H1 (cell line): ENCODE measurements at regions of chr14 and their contacts with region 1.

Region 1: GRCh38 chr14:22084393-22085281 is 411.0 kb upstream of the OR4E1 start:
- DNase-seq: no peak
- H3K4me3 ChIP-seq: no peak overlapping the region
- H3K27ac ChIP-seq: no peak overlapping the region
- H3K4me1 ChIP-seq: peaks cover 0 to 3% (median 0%) of the 10 kb centered on the region in 4 experiments; a peak in 2 of 7 replicates
- H3K27me3 ChIP-seq: no peaks in the 10 kb centered on the region
- CTCF ChIP-seq: peak in 2 of 3 experiments; percentile 45 to 62; a peak in 2 of 4 replicates
- EP300 ChIP-seq: no peak
- POLR2A ChIP-seq: no peak
- RAD21 ChIP-seq: peak; percentile 44 to 45

Region 2: GRCh38 chr14:22070119-22071011 is 14.3 kb before region 1 on chr14:
- CTCF ChIA-PET with region 1: interaction called, 10 read pairs
- POLR2A ChIA-PET with region 1: no interaction called
- DNase-seq: peak in 1 of 2 experiments; percentile 60
- H3K4me3 ChIP-seq: peak overlapping the region; percentile 10 to 58 (median 28); a peak in 5 of 8 replicates
- H3K27ac ChIP-seq: no peak overlapping the region
- H3K4me1 ChIP-seq: peaks cover 0 to 5% (median 0%) of the 10 kb centered on the region in 4 experiments; a peak in 1 of 7 replicates
- H3K27me3 ChIP-seq: no peaks in the 10 kb centered on the region
- CTCF ChIP-seq: no peak
- EP300 ChIP-seq: no peak
- POLR2A ChIP-seq: no peak
- RAD21 ChIP-seq: no peak

Region 3: GRCh38 chr14:22122227-22122818 is 37.7 kb after region 1 on chr14:
- CTCF ChIA-PET with region 1: no interaction called
- POLR2A ChIA-PET with region 1: no interaction called
- DNase-seq: no peak
- H3K4me3 ChIP-seq: no peak overlapping the region
- H3K27ac ChIP-seq: no peak overlapping the region
- H3K4me1 ChIP-seq: no peaks in the 10 kb centered on the region
- H3K27me3 ChIP-seq: no peaks in the 10 kb centered on the region
- CTCF ChIP-seq: peak in 2 of 3 experiments; percentile 44 to 60; a peak in 3 of 4 replicates
- EP300 ChIP-seq: no peak
- POLR2A ChIP-seq: no peak
- RAD21 ChIP-seq: peak; percentile 55 to 65

Region 4: GRCh38 chr14:22159099-22159498 is 74.5 kb after region 1 on chr14:
- CTCF ChIA-PET with region 1: no interaction called
- POLR2A ChIA-PET with region 1: no interaction called
- DNase-seq: no peak
- H3K4me3 ChIP-seq: no peak overlapping the region
- H3K27ac ChIP-seq: no peak overlapping the region
- H3K4me1 ChIP-seq: no peaks in the 10 kb centered on the region; a peak in 1 of 7 replicates
- H3K27me3 ChIP-seq: no peaks in the 10 kb centered on the region
- CTCF ChIP-seq: no peak
- EP300 ChIP-seq: no peak
- POLR2A ChIP-seq: no peak
- RAD21 ChIP-seq: no peak